Mammary epithelial cell (primary cell): ENCODE measurements at regions of chr1 and their contacts with region 1.

Region 1: DNA sequence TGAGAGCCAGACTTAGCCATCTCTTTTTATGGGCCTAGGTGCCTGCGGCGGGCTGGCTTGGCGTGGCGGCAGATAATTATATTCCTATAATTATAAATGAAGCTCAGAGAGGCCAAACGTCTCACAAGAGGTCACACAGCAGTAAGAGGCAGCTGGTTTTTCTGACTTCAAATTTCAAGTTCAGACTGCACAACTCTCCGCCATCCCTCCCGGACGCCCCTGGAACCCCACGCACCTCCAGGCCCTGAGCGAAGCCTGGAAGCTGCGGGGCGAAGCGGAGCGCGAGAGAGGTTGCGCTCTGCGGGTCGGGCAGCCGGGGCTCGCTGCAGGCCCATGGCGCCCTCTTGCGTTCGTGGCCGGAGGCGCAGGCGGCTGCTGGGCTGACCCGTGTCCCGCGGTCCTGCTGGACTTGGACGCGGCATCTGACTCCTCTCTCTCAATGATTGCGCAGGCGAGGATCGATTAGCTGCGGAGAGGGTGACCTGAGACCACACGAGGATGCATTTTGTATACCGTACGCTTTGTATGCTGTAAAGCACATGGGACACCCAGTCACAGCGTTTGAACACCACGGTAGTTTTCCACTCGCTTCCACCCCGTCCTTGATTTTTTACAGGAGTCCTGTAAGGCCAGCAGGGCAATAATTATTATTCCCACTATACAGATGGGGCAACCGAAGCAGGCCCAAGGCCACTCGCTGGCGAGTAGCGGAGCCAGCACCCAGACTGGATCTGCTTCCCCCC is 272.7 kb downstream of the FOXD2 start:
- DNase-seq: peak; percentile 41
- H3K4me3 ChIP-seq: no peak overlapping the region
- H3K27ac ChIP-seq: no peak overlapping the region
- H3K4me1 ChIP-seq: peaks cover 23% of the 10 kb centered on the region
- H3K27me3 ChIP-seq: peaks cover 29% of the 10 kb centered on the region
- CTCF ChIP-seq: peak; percentile 87 to 100

Region 2: DNA sequence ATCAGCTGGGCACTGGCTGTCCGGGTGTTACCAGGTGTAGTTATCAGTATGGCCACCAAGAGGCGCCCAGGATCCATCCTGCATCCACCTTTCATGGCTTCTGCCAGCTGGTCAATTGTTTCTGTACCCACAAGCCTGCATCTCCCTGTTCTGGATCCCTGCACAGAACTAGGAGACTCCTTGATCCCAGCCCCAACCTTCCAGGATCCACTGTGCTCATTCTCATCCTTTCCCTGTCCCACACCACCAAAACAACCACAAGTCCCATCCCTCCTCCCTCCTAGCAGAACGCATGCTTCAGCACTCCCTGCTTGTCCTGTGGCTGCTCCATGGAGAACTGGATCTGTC is 321.6 kb before region 1 on chr1:
- CTCF ChIA-PET with region 1: no interaction called
- dilution Hi-C with region 1: no loop called
- in situ Hi-C with region 1: no loop called
- intact Hi-C with region 1: loop called (anchors 1 kb)
- DNase-seq: peak; percentile 56
- H3K4me3 ChIP-seq: no peak overlapping the region
- H3K27ac ChIP-seq: no peak overlapping the region
- H3K4me1 ChIP-seq: no peaks in the 10 kb centered on the region
- H3K27me3 ChIP-seq: no peaks in the 10 kb centered on the region
- CTCF ChIP-seq: peak; percentile 87 to 89

Region 3: DNA sequence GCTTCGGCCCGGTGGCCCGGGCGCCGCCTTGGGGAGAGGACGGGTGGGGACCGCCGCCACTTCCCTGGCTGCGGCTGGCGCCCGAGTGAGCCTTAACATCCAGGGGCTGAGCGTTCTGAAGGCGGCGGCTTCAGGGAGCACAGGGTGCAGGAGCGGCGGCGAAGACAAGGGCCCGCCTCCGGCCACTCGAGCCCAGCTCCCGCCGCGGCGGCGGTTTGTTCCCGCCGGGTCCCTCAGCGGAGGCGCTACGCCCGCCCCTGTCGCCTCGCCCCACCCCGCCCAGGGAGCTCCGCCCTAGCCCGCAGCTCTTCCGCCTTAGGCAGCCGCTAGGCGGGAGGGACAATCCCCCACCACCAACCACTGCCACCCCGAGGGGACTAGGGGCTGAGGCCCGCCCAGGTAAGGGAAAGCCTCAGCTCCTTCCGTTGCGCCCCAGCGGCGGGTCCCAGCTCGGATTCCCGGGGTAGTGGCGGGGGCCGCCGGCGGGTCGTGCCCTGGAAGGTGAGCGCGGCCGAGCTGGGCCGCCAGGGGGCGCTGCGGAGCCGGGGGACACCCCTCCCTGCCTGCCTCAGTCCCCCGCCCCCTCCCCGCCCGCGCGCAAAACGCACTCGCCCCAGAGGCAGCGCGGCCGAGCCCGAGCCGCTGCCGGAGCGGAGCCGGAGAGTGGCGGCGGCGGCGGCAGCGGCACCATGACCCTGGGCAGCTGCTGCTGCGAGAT is 272.9 kb before region 1 on chr1 and contains the start of gene FOXD2:
- CTCF ChIA-PET with region 1: interaction called, 12 read pairs
- dilution Hi-C with region 1: no loop called
- in situ Hi-C with region 1: loop called in 1 of 2 experiments (anchors 10 kb)
- intact Hi-C with region 1: loop called (anchors 1 kb)
- DNase-seq: peak; percentile 86
- H3K4me3 ChIP-seq: peak within 1 kb of the TSS; percentile 67 to 91 (median 71)
- H3K27ac ChIP-seq: peak within 1 kb of the TSS; percentile 56
- H3K4me1 ChIP-seq: peaks cover 35% of the 10 kb centered on the region
- H3K27me3 ChIP-seq: peaks cover 19% of the 10 kb centered on the region
- CTCF ChIP-seq: peak; percentile 39 to 75
- total RNA-seq, gene FOXD2: 0.50 to 1.1 TPM

Region 4: DNA sequence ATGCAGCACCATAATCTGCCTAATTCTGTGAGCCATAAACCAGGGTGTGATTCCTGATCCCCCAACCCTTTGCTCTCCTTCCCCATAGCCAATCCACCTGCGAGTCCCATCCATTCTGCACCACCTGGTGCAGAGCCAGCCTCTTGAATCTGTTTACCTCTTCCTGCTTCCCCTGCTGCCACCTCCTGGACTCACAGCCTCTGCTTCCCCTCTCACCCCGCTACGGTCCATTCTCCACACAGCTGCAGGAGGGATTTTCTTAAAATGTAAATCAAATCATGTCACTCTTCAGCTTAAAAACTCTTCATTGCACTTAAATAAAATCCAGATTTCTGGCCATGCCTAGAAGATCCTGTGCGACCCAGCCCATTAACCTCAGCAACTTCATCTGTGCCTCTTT is 86.0 kb before region 1 on chr1:
- CTCF ChIA-PET with region 1: no interaction called
- dilution Hi-C with region 1: no loop called
- in situ Hi-C with region 1: no loop called
- intact Hi-C with region 1: loop called (anchors 1 kb)
- DNase-seq: peak; percentile 10
- H3K4me3 ChIP-seq: no peak overlapping the region
- H3K27ac ChIP-seq: no peak overlapping the region
- H3K4me1 ChIP-seq: no peaks in the 10 kb centered on the region
- H3K27me3 ChIP-seq: no peaks in the 10 kb centered on the region
- CTCF ChIP-seq: peak; percentile 39 to 72